ENCODE measurements at regions of chr15 and their contacts with region 1.

Region 1: GRCh38 chr15:74826364-74826819 is at the start of gene CPLX3:
- DNase-seq: peak in 1 of 2 experiments; percentile 84
- H3K4me3 ChIP-seq: peak within 1 kb of the TSS in 2 of 4 experiments; percentile 5 to 41; a peak in 3 of 8 replicates
- H3K27ac ChIP-seq: no peak within 1 kb of the TSS
- H3K4me1 ChIP-seq: peaks cover 0 to 9% (median 4%) of the 10 kb centered on the region in 4 experiments; a peak in 4 of 7 replicates
- H3K27me3 ChIP-seq: peaks cover 4 to 47% (median 29%) of the 10 kb centered on the region in 4 experiments
- CTCF ChIP-seq: no peak
- EP300 ChIP-seq: no peak
- POLR2A ChIP-seq: no peak
- RAD21 ChIP-seq: no peak
- total RNA-seq, gene CPLX3: not detected in 2 replicates

Region 2: GRCh38 chr15:74781431-74782258 is 44.7 kb before region 1 on chr15 and contains the start of gene CSK:
- CTCF ChIA-PET with region 1: interaction called, 21 read pairs
- POLR2A ChIA-PET with region 1: no interaction called
- DNase-seq: peak in 1 of 2 experiments; percentile 79
- H3K4me3 ChIP-seq: peak within 1 kb of the TSS; percentile 55 to 82 (median 60)
- H3K27ac ChIP-seq: no peak within 1 kb of the TSS
- H3K4me1 ChIP-seq: peaks cover 4 to 25% (median 20%) of the 10 kb centered on the region in 4 experiments
- H3K27me3 ChIP-seq: peaks cover 0 to 15% (median 11%) of the 10 kb centered on the region in 4 experiments; a peak in 6 of 7 replicates
- CTCF ChIP-seq: peak; percentile 44 to 72 (median 50)
- EP300 ChIP-seq: no peak
- POLR2A ChIP-seq: no peak
- RAD21 ChIP-seq: no peak; a peak in 1 of 4 replicates
- total RNA-seq, gene CSK: 50.2 and 51.7 TPM in 2 replicates

Region 3: DNA sequence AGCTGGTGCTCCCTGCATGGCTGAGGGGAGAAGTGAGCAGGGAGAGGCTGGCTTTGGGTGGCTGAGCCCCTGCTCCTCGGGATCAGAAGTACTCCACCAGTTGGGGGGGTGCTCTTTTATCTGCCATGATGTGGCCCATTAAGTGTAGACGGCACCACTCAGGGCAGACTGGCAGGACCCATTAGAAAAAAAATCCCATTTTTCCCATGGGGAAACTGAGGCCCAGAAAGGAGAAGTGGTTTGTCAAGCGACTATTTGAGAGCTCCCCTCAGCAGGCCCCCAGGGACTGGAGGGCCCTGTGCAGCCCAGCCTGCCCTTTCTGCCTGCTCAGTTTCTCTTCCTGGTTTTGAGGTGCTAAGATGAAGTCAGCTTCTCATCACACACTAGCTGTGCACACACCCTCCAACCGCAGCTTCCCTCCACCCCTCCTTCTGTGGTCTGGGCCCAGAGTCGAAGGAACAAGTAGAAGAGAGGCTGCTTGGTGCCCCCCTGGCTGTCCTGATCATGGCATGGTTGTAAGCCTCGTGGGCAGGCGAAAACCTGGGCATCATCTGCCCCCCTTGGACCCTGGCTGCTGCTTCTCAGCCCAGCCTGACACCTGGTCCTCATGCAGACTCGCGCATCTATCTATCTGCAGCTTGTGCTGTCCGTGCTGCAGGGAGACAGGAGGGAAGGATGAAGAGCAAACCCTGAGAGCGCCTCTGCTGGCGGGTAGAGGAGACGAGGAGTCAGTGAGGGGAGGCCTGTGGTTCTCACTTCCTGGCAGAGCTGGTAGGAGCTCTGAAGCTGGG is 38.9 kb before region 1 on chr15:
- CTCF ChIA-PET with region 1: interaction called, 21 read pairs
- POLR2A ChIA-PET with region 1: no interaction called
- DNase-seq: peak in 1 of 2 experiments; percentile 71
- H3K4me3 ChIP-seq: no peak overlapping the region
- H3K27ac ChIP-seq: no peak overlapping the region
- H3K4me1 ChIP-seq: peaks cover 4 to 34% (median 22%) of the 10 kb centered on the region in 4 experiments
- H3K27me3 ChIP-seq: no peaks in the 10 kb centered on the region
- CTCF ChIP-seq: peak; percentile 79 to 95 (median 88)
- EP300 ChIP-seq: no peak
- POLR2A ChIP-seq: no peak
- RAD21 ChIP-seq: peak; percentile 11 to 47; a peak in 2 of 4 replicates

Region 4: GRCh38 chr15:74964794-74965193 is 138.4 kb after region 1 on chr15:
- CTCF ChIA-PET with region 1: no interaction called
- POLR2A ChIA-PET with region 1: no interaction called
- DNase-seq: no peak
- H3K4me3 ChIP-seq: no peak overlapping the region
- H3K27ac ChIP-seq: no peak overlapping the region
- H3K4me1 ChIP-seq: peaks cover 0 to 2% (median 0%) of the 10 kb centered on the region in 4 experiments; a peak in 3 of 7 replicates
- H3K27me3 ChIP-seq: peaks cover 0 to 6% (median 0%) of the 10 kb centered on the region in 4 experiments; a peak in 3 of 7 replicates
- CTCF ChIP-seq: no peak
- EP300 ChIP-seq: no peak
- POLR2A ChIP-seq: no peak
- RAD21 ChIP-seq: no peak